Natural killer cell (primary cell): ENCODE measurements at regions of chr20 and their contacts with region 1.

Region 1: GRCh38 chr20:45771182-45771759 is 20.4 kb downstream of the WFDC3 start:
- DNase-seq: peak; percentile 78 to 91
- ATAC-seq: peak; percentile 91 to 94 (median 94)
- H3K4me3 ChIP-seq: no peak overlapping the region
- H3K4me3 Mint-ChIP-seq: no peak overlapping the region
- H3K27ac ChIP-seq: no peak overlapping the region
- H3K27ac Mint-ChIP-seq: no peak overlapping the region
- H3K4me1 ChIP-seq: no peaks in the 10 kb centered on the region
- H3K4me1 Mint-ChIP-seq: peaks cover 3 to 4% of the 10 kb centered on the region in 2 donors
- H3K27me3 ChIP-seq: no peaks in the 10 kb centered on the region
- H3K27me3 Mint-ChIP-seq: peaks cover 7 to 19% of the 10 kb centered on the region in 2 donors
- CTCF ChIP-seq: peak; percentile 94

Region 2: GRCh38 chr20:45450097-45450818 is 321.0 kb before region 1 on chr20:
- intact Hi-C with region 1: loop called (anchors 5 kb)
- DNase-seq: peak in 1 of 2 donors; percentile 71
- ATAC-seq: peak; percentile 53 to 66 (median 60)
- H3K4me3 ChIP-seq: no peak overlapping the region
- H3K4me3 Mint-ChIP-seq: no peak overlapping the region
- H3K27ac ChIP-seq: no peak overlapping the region
- H3K27ac Mint-ChIP-seq: no peak overlapping the region
- H3K4me1 ChIP-seq: peaks cover 4% of the 10 kb centered on the region
- H3K4me1 Mint-ChIP-seq: no peaks in the 10 kb centered on the region
- H3K27me3 ChIP-seq: no peaks in the 10 kb centered on the region
- H3K27me3 Mint-ChIP-seq: peaks cover 2 to 13% of the 10 kb centered on the region in 2 donors
- CTCF ChIP-seq: peak; percentile 77

Region 3: GRCh38 chr20:45695496-45695895 is 75.8 kb before region 1 on chr20:
- intact Hi-C with region 1: no loop called
- DNase-seq: no peak
- ATAC-seq: no peak
- H3K4me3 ChIP-seq: no peak overlapping the region
- H3K4me3 Mint-ChIP-seq: no peak overlapping the region
- H3K27ac ChIP-seq: no peak overlapping the region
- H3K27ac Mint-ChIP-seq: no peak overlapping the region
- H3K4me1 ChIP-seq: no peaks in the 10 kb centered on the region
- H3K4me1 Mint-ChIP-seq: no peaks in the 10 kb centered on the region
- H3K27me3 ChIP-seq: peaks cover 2% of the 10 kb centered on the region
- H3K27me3 Mint-ChIP-seq: peaks cover 14 to 33% of the 10 kb centered on the region in 2 donors
- CTCF ChIP-seq: no peak

Region 4: GRCh38 chr20:45758068-45758467 is 13.2 kb before region 1 on chr20:
- intact Hi-C with region 1: no loop called
- DNase-seq: no peak
- ATAC-seq: peak in 1 of 3 donors; percentile 24
- H3K4me3 ChIP-seq: no peak overlapping the region
- H3K4me3 Mint-ChIP-seq: no peak overlapping the region
- H3K27ac ChIP-seq: no peak overlapping the region
- H3K27ac Mint-ChIP-seq: no peak overlapping the region
- H3K4me1 ChIP-seq: no peaks in the 10 kb centered on the region
- H3K4me1 Mint-ChIP-seq: no peaks in the 10 kb centered on the region
- H3K27me3 ChIP-seq: no peaks in the 10 kb centered on the region
- H3K27me3 Mint-ChIP-seq: peaks cover 7 to 12% of the 10 kb centered on the region in 2 donors
- CTCF ChIP-seq: no peak